ENCODE measurements at regions of chr2 and their contacts with region 1.

Region 1: DNA sequence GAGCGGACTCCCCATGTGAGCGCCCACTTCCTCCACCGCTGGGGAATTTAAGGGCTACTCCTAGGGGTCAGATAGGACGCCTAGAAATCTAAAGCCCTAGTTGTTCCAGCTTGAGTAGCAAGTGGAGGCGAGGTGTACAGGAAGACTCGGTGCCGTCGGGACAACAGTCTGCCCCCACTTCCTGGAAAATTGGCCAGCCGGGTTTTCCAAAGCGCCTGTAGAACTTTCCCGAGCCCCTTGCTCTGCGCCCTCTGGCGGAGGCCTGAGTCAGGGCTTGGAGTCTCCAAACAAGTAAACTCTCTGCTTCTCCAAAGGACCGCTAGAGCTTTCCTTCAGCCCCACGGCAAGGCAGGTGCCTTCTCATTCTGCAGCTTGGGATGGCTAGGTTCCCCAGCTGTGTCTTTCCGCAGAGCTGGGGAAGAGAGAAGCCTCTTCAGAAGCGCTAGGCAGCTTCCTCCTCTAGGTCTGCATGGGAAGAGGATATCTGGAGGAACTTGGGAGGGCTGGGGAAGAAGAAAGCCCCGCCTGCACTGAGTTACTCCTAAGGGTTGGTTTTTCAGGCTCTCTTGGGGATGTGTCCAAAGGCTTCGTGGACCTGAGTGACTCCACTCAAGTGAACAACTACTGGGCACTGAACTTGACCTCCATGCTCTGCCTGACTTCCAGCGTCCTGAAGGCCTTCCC is 688 bp downstream of the SPR start:
- DNase-seq: peak; percentile 54
- H3K4me3 Mint-ChIP-seq: peak overlapping the region; percentile 60
- H3K27ac Mint-ChIP-seq: no peak overlapping the region
- H3K4me1 Mint-ChIP-seq: peaks cover 6% of the 10 kb centered on the region
- H3K27me3 Mint-ChIP-seq: peaks cover 48% of the 10 kb centered on the region

Region 2: GRCh38 chr2:72862239-72862988 is 25.5 kb before region 1 on chr2:
- CTCF ChIA-PET with region 1: interaction called, 15 read pairs
- POLR2A ChIA-PET with region 1: no interaction called
- DNase-seq: peak; percentile 88
- H3K4me3 Mint-ChIP-seq: peak overlapping the region; percentile 25
- H3K27ac Mint-ChIP-seq: no peak overlapping the region
- H3K4me1 Mint-ChIP-seq: peaks cover 14% of the 10 kb centered on the region
- H3K27me3 Mint-ChIP-seq: peaks cover 48% of the 10 kb centered on the region

Region 3: DNA sequence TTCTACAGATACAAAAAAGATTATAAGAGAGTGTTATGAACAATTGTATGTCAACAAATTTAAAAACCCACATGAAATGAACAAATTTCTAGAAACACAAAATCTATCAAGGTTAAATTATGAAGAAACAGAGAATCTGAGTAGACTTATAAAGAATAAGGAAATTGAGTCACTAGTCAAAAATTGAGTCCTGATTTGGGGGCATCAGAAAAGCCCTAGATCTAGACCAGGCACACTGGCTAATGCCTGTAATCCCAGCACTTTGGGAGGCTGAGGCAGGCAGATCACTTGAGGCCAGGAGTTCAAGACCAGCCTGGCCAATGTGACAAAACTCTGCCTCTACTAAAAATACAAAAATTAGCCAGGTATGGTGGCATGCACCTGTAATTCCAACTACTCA is 16.0 kb before region 1 on chr2:
- CTCF ChIA-PET with region 1: interaction called, 14 read pairs
- POLR2A ChIA-PET with region 1: no interaction called
- DNase-seq: no peak
- H3K4me3 Mint-ChIP-seq: no peak overlapping the region
- H3K27ac Mint-ChIP-seq: no peak overlapping the region
- H3K4me1 Mint-ChIP-seq: no peaks in the 10 kb centered on the region
- H3K27me3 Mint-ChIP-seq: peaks cover 50% of the 10 kb centered on the region

Region 4: DNA sequence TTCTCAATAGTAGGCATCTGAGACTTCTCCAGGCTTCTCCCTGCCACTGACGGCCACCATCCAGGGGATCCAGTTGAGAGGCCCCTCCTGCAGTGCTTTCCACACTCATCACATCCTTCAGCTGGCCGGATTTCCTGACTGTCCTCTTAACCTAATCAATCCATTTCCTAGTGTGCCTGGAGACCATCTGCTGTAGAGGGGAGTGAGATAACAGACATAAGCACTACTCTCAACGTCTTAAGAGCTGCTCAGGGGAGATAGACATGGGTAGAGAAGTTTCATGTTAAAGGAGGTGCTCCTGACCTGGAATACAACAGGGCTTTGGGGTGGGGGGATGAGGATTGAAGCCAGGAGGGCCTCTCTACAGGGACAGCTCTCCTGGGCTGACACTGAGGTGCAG is 13.5 kb after region 1 on chr2:
- CTCF ChIA-PET with region 1: interaction called, 17 read pairs
- POLR2A ChIA-PET with region 1: no interaction called
- DNase-seq: no peak
- H3K4me3 Mint-ChIP-seq: no peak overlapping the region
- H3K27ac Mint-ChIP-seq: no peak overlapping the region
- H3K4me1 Mint-ChIP-seq: no peaks in the 10 kb centered on the region
- H3K27me3 Mint-ChIP-seq: peaks cover 68% of the 10 kb centered on the region

Region 5: DNA sequence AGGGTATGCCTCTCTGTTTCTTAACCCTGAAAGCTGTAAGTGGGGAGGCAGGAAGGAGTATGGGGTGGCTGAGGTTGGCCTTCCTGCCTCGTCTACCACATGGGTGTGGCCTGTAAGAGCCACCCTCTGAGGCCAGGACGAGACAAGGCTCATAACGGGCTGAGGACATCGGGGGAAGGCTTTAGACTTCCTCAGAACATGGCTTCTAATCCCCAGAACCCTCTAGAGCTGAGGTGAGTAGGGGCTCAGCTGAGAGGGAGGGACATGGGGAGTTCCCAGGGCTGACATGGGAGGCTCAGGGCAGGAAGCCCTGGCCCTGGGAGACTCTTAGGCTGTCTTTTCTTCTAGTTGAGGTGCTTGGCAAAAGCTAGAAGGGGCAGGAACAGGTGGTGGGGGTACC is 66.1 kb after region 1 on chr2:
- CTCF ChIA-PET with region 1: interaction called, 25 read pairs
- POLR2A ChIA-PET with region 1: interaction called, 6 read pairs
- DNase-seq: peak; percentile 81
- H3K4me3 Mint-ChIP-seq: peak overlapping the region; percentile 87
- H3K27ac Mint-ChIP-seq: peak overlapping the region; percentile 88
- H3K4me1 Mint-ChIP-seq: peaks cover 44% of the 10 kb centered on the region
- H3K27me3 Mint-ChIP-seq: no peaks in the 10 kb centered on the region

Region 6: GRCh38 chr2:72973566-72974435 is 85.9 kb after region 1 on chr2:
- CTCF ChIA-PET with region 1: interaction called, 171 read pairs
- POLR2A ChIA-PET with region 1: interaction called, 3 read pairs
- DNase-seq: peak; percentile 54
- H3K4me3 Mint-ChIP-seq: no peak overlapping the region
- H3K27ac Mint-ChIP-seq: no peak overlapping the region
- H3K4me1 Mint-ChIP-seq: no peaks in the 10 kb centered on the region
- H3K27me3 Mint-ChIP-seq: peaks cover 22% of the 10 kb centered on the region